ENCODE measurements at regions of chr10 and their contacts with region 1.

Region 1: DNA sequence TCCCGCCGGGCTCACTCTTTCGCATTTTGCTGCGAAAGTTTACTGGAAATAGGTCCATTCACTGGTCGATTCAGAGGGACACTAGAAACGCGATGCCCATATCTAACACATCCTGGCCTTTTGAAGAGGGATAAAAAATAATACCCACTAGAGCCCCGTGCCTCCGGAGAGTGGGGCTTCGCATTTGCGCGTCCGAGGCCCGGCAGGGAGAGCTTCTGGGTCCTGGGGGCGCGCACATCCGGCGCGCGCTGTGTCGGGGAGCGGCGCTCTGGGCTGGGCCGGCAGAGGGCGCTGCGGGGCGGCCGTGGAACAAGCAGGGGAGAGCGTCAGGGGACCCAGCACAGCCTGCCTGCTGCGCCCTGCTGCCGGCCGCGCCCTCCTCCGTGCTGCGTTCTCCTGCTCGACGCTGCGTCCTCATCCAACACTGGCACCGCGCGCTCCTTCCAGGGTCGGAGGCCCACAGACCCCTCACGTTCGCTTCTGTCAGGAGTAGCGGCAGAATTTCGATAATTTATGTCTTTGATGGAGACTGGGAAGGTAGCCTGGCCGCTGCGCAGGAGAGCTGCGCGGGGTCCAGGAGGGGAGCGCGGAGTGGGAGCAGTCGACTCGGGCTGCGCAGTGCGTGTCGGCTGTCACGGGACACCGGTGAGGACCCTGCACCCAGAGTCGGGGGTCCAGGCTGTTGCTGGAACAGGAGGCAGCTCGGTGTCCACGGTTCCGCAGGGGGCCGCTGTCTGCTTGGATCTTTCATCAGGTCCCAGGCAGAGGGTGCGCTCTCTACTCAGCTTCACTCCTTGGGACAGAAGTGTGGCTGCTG is 41.5 kb upstream of the ZNF32 start:
- DNase-seq: peak; percentile 74
- H3K4me3 ChIP-seq: peak overlapping the region in 2 of 3 experiments; percentile 22 to 35
- H3K27ac ChIP-seq: peak overlapping the region; percentile 7
- H3K4me1 ChIP-seq: peaks cover 31% of the 10 kb centered on the region
- H3K27me3 ChIP-seq: no peaks in the 10 kb centered on the region
- CTCF ChIP-seq: peak; percentile 90 to 91
- POLR2A ChIP-seq: no peak

Region 2: GRCh38 chr10:43078987-43079275 is 611.2 kb before region 1 on chr10:
- CTCF ChIA-PET with region 1: no interaction called
- POLR2A ChIA-PET with region 1: no interaction called
- dilution Hi-C with region 1: no loop called
- intact Hi-C with region 1: no loop called
- DNase-seq: no peak
- H3K4me3 ChIP-seq: no peak overlapping the region
- H3K27ac ChIP-seq: no peak overlapping the region
- H3K4me1 ChIP-seq: peaks cover 2% of the 10 kb centered on the region
- H3K27me3 ChIP-seq: peaks cover 17% of the 10 kb centered on the region in 2 experiments
- CTCF ChIP-seq: peak; percentile 42 to 66
- POLR2A ChIP-seq: no peak

Region 3: GRCh38 chr10:43420369-43421200 is 269.6 kb before region 1 on chr10:
- CTCF ChIA-PET with region 1: no interaction called
- POLR2A ChIA-PET with region 1: no interaction called
- dilution Hi-C with region 1: no loop called
- intact Hi-C with region 1: no loop called
- DNase-seq: peak; percentile 84
- H3K4me3 ChIP-seq: peak overlapping the region; percentile 11 to 51 (median 37)
- H3K27ac ChIP-seq: peak overlapping the region; percentile 68
- H3K4me1 ChIP-seq: peaks cover 16% of the 10 kb centered on the region
- H3K27me3 ChIP-seq: no peaks in the 10 kb centered on the region
- CTCF ChIP-seq: peak in 1 of 2 donors; percentile 23
- POLR2A ChIP-seq: peak; percentile 68

Region 4: GRCh38 chr10:43648398-43649184 is 41.6 kb before region 1 on chr10 and contains the start of gene ZNF32:
- CTCF ChIA-PET with region 1: no interaction called
- POLR2A ChIA-PET with region 1: no interaction called
- dilution Hi-C with region 1: no loop called
- intact Hi-C with region 1: loop called (anchors 2 kb)
- DNase-seq: peak; percentile 80
- H3K4me3 ChIP-seq: peak within 1 kb of the TSS; percentile 50 to 77 (median 62)
- H3K27ac ChIP-seq: peak within 1 kb of the TSS; percentile 42
- H3K4me1 ChIP-seq: peaks cover 5% of the 10 kb centered on the region
- H3K27me3 ChIP-seq: peaks cover 0 to 6% of the 10 kb centered on the region in 2 experiments
- CTCF ChIP-seq: no peak
- POLR2A ChIP-seq: peak; percentile 37
- total RNA-seq, gene ZNF32: 14.4 and 14.5 TPM in 2 replicates

Region 5: GRCh38 chr10:43785252-43785651 is 95.1 kb after region 1 on chr10:
- CTCF ChIA-PET with region 1: interaction called, 16 read pairs
- POLR2A ChIA-PET with region 1: no interaction called
- dilution Hi-C with region 1: no loop called
- intact Hi-C with region 1: loop called (anchors 1 kb)
- DNase-seq: peak; percentile 21
- H3K4me3 ChIP-seq: no peak overlapping the region
- H3K27ac ChIP-seq: no peak overlapping the region
- H3K4me1 ChIP-seq: no peaks in the 10 kb centered on the region
- H3K27me3 ChIP-seq: peaks cover 0 to 3% of the 10 kb centered on the region in 2 experiments
- CTCF ChIP-seq: no peak
- POLR2A ChIP-seq: no peak

Region 6: DNA sequence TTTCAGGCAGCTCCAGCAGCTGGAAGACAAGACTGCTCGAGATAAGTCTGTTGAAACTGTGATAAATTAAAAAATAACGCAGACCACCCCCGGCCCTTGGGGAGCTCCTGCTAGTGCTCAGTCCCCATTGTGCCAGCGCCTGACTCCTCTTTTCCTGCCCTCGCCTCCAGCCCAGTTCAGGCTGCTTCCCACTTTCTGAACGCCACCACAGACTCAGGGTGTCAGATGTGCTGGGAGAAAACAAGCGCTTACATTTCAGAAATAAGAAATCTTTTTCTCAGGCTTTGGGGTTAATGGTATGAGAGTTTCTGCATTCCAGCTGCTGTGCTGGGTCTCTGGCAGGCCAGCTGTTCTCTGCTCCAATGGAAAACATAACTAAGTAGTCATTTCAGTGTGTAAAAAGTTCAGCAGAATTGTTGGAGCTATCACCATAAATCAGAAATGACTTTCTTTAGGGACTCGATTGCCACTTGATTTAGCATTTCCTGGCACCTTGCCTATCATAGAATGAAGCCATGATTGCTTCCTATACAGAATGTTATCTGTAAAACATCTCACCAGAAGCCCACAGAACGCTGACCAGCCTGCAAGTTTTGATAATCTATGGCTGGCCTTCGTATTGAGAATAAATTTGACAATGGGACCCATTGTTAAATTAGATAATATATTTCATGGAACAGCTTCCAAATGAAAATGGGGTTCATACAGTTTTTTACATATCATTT is 215.5 kb after region 1 on chr10:
- CTCF ChIA-PET with region 1: interaction called, 12 read pairs
- POLR2A ChIA-PET with region 1: no interaction called
- dilution Hi-C with region 1: no loop called
- intact Hi-C with region 1: no loop called
- DNase-seq: peak; percentile 11
- H3K4me3 ChIP-seq: no peak overlapping the region
- H3K27ac ChIP-seq: no peak overlapping the region
- H3K4me1 ChIP-seq: peaks cover 6% of the 10 kb centered on the region
- H3K27me3 ChIP-seq: peaks cover 0 to 8% of the 10 kb centered on the region in 2 experiments
- CTCF ChIP-seq: no peak
- POLR2A ChIP-seq: no peak

Region 7: GRCh38 chr10:44046605-44047004 is 356.4 kb after region 1 on chr10:
- CTCF ChIA-PET with region 1: interaction called, 46 read pairs
- POLR2A ChIA-PET with region 1: no interaction called
- dilution Hi-C with region 1: no loop called
- intact Hi-C with region 1: loop called (anchors 5 kb)
- DNase-seq: peak; percentile 29
- H3K4me3 ChIP-seq: no peak overlapping the region
- H3K27ac ChIP-seq: no peak overlapping the region
- H3K4me1 ChIP-seq: peaks cover 2% of the 10 kb centered on the region
- H3K27me3 ChIP-seq: peaks cover 1 to 12% of the 10 kb centered on the region in 2 experiments
- CTCF ChIP-seq: peak in 1 of 2 donors; percentile 12
- POLR2A ChIP-seq: no peak

Region 8: GRCh38 chr10:44857363-44858016 is 1167.3 kb after region 1 on chr10:
- CTCF ChIA-PET with region 1: interaction called, 12 read pairs
- POLR2A ChIA-PET with region 1: no interaction called
- dilution Hi-C with region 1: no loop called
- intact Hi-C with region 1: no loop called
- DNase-seq: peak; percentile 40
- H3K4me3 ChIP-seq: no peak overlapping the region
- H3K27ac ChIP-seq: no peak overlapping the region
- H3K4me1 ChIP-seq: no peaks in the 10 kb centered on the region
- H3K27me3 ChIP-seq: no peaks in the 10 kb centered on the region
- CTCF ChIP-seq: peak; percentile 94 to 97
- POLR2A ChIP-seq: no peak

Measured in endothelial cell of umbilical vein (primary cell).